Activated naive CD4-positive, alpha-beta T cell treated with anti-CD3 and anti-CD28 coated beads for 36 hours (primary cell): ENCODE measurements at regions of chr15 and their contacts with region 1.

Region 1: DNA sequence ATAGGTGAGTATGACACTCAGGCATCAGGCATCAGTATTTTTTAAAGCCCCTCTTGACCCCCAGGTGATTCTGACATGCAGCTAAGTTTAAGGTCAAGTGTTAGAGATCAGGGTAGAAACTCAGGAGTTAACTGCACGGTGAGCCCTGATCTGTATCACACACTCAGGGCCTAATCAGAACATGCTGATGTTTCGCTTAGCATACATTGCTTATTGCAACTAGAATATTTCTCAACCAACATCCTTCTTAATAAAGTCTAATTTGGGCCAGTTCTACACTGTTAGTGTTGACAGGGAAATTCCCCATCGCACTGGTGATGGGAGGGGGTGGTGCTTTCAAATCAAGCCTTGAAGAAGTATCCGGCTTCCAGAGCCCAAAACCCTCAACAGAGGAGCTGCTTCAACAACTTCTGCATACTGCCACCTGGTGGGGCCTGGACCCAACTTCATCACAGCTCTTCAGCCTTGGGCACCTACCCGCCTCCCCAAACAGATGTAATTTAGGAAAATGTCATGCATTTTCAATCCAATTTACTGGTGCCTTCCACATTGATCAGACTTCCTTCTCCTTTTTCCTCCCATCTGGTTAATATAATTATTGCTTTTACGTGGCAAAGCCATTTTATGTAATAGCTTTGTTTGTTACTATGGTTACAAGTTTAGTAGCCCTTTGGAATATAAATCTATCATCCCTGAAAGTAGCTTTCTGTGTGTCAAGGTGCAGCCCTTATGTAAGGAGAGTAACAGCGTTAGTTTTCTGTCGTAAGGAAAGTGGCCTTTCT is 312.2 kb downstream of the RORA start:
- DNase-seq: peak; percentile 96
- H3K4me3 Mint-ChIP-seq: no peak overlapping the region
- H3K27ac Mint-ChIP-seq: peak overlapping the region; percentile 62
- H3K4me1 Mint-ChIP-seq: peaks cover 25% of the 10 kb centered on the region
- H3K27me3 Mint-ChIP-seq: peaks cover 2% of the 10 kb centered on the region

Region 2: DNA sequence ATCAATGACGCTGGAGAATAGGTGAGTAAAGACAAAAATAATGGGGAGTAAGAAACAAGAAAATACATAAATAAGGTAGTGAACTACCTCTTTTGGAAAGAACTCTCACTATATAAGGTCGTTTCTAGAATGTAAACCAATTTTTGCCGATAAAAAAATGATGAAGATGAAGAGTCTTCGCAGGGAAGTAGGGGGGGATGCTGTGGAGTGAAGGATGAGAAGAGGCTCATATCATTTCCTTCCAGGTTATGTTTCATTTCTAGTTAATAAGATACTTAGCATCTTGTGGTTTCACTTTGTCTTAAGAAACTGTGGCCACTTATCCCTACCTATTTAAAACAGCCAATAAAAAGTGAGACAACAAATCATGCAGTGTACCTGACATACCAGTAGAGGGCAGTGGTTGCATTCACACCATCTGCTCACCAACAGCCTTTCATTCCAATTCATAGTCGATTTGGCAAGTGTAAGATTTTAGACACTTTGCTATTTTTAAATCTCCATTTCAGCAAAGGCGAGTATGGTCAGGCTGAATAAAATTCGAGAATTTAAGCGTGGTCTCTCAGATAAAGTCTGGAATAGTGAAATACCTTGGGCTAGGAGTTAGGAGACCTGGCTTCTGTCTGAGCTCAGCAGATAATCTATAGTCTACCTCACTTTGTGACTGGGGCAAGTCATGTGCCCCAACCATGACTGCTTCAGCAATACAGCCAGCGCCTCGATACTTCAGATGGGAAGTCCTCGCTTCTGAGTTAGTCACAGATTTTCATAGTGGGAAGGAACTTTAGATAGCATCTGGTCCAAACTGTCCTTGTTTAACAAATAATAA is 409.1 kb before region 1 on chr15:
- CTCF ChIA-PET with region 1: interaction called, 5 read pairs
- intact Hi-C with region 1: loop called (anchors 1 kb)
- DNase-seq: peak; percentile 70
- H3K4me3 Mint-ChIP-seq: no peak overlapping the region
- H3K27ac Mint-ChIP-seq: peak overlapping the region; percentile 68
- H3K4me1 Mint-ChIP-seq: peaks cover 48% of the 10 kb centered on the region
- H3K27me3 Mint-ChIP-seq: no peaks in the 10 kb centered on the region

Region 3: DNA sequence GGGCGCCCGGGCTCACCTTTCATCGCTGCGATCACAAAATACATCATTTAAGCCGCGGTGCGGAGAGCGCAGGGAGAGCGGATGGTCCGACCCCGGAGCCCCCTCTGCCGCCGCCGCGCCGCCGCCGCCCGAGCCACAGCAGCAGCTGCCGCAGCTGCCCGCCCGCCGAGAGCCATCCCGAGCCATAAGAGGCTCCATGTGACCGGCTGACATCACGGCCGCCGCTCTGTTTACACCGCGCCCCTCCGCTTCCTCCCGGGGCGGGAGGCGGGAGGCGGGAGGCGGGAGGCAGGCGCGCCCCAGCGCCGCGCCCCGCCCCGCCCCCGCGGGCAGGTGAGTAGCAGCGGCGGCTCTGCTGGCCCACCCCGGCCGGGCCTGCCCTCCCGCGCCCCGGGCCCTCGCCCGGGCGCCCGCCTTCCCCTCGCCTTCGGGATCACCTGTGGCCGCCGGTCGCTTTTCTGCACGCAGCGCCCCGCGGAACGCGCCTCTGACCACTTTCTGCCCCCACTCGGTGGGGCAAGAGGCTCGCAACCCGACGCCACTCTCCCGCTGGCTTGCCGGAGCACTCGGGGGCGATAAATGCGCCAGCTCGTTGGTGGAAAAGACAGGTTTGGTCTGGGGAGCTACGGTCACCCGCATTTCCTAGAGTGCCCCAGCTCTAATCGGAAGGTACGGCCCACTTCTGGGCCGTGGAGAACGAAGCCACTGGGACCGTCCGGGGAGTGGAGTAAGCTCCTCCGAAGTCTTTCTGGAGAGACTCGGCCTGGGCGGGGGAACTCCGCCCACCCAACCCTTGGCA is 324.3 kb before region 1 on chr15:
- CTCF ChIA-PET with region 1: interaction called, 56 read pairs
- intact Hi-C with region 1: no loop called
- DNase-seq: peak; percentile 89
- H3K4me3 Mint-ChIP-seq: peak overlapping the region; percentile 76
- H3K27ac Mint-ChIP-seq: peak overlapping the region; percentile 67
- H3K4me1 Mint-ChIP-seq: peaks cover 31% of the 10 kb centered on the region
- H3K27me3 Mint-ChIP-seq: no peaks in the 10 kb centered on the region

Region 4: GRCh38 chr15:60720493-60721256 is 196.2 kb before region 1 on chr15:
- CTCF ChIA-PET with region 1: interaction called, 4 read pairs
- intact Hi-C with region 1: loop called (anchors 1 kb)
- DNase-seq: peak; percentile 90
- H3K4me3 Mint-ChIP-seq: peak overlapping the region; percentile 49
- H3K27ac Mint-ChIP-seq: peak overlapping the region; percentile 99
- H3K4me1 Mint-ChIP-seq: peaks cover 59% of the 10 kb centered on the region
- H3K27me3 Mint-ChIP-seq: no peaks in the 10 kb centered on the region

Region 5: GRCh38 chr15:60840306-60840702 is 76.6 kb before region 1 on chr15:
- CTCF ChIA-PET with region 1: interaction called, 13 read pairs
- intact Hi-C with region 1: no loop called
- DNase-seq: peak; percentile 53
- H3K4me3 Mint-ChIP-seq: peak overlapping the region; percentile 76
- H3K27ac Mint-ChIP-seq: peak overlapping the region; percentile 84
- H3K4me1 Mint-ChIP-seq: peaks cover 73% of the 10 kb centered on the region
- H3K27me3 Mint-ChIP-seq: no peaks in the 10 kb centered on the region

Region 6: DNA sequence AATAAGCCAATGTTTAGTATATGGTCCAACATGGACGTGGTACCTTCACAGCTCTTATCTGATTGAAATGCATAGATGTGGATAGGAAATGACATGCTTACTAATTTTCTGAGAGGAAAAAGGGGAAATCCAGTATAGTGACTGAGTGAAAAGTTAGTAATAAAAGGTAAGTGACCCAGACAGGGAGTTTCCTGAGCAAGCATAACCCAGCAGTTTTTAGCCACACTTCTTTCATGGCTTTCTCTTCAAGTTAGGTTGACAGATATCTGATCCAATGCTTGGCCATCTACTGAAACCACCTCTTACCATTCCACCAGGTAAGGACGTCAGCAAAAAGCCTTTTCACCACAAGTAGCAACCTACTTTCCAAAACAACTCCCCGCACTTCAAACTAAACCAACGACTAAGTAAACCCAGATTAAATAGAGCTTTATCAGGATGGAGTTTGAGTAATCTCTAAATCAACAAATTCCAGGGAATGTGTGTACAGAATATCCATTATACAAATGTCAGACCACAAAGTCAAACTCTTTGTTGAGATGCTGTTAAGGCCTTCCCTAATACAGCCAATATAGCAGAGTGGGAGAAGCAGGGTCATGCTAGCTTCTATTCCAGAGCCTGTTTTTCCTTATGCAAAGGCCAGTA is 17.4 kb before region 1 on chr15:
- CTCF ChIA-PET with region 1: interaction called, 29 read pairs
- intact Hi-C with region 1: loop called (anchors 1 kb)
- DNase-seq: peak; percentile 60
- H3K4me3 Mint-ChIP-seq: no peak overlapping the region
- H3K27ac Mint-ChIP-seq: peak overlapping the region; percentile 74
- H3K4me1 Mint-ChIP-seq: peaks cover 63% of the 10 kb centered on the region
- H3K27me3 Mint-ChIP-seq: no peaks in the 10 kb centered on the region

Region 7: DNA sequence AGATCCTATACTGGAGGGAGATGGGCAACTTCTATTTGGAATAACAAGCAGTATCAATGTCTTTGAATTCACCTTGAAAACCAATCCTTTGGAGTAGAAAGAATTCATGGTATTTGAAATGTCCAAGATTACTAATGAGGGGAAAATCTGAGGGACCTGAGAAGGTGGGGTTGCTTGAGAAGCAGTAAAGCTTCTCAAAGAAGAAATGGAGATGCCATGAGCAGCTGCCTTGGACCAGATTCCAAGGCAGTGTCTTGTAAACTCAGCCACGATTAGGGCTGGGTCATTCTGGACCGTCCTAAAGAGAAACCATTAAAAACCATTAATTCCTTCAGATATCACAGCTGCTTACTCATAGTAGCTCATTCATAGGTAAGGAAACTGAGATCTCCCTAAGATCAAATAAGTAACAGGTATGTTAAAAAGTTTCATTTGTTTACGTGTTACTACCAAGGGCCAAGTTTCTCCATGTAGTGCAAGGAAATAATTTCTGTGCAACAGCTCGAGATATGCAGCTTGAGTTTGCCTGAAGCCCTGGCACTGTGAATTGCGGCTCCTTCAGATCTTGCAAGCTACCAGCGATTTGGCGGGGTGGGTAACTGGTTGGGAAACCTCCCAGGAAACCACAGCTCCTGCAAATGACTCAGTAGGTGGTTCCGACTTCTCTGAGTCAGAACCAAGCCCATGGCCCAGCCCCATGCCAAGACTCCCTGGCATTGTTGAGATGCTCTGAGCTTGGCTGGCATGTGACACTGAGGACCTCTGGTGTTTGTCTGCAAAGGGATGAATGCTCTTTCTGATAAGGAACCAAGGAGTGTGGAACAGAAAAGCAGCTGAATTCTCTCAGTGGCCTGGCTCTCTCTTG is 15.4 kb after region 1 on chr15:
- CTCF ChIA-PET with region 1: interaction called, 14 read pairs
- intact Hi-C with region 1: no loop called
- DNase-seq: peak; percentile 71
- H3K4me3 Mint-ChIP-seq: no peak overlapping the region
- H3K27ac Mint-ChIP-seq: no peak overlapping the region
- H3K4me1 Mint-ChIP-seq: peaks cover 12% of the 10 kb centered on the region
- H3K27me3 Mint-ChIP-seq: peaks cover 10% of the 10 kb centered on the region